Mammary epithelial cell (primary cell): ENCODE measurements at regions of chr15 and their contacts with region 1.

Region 1: DNA sequence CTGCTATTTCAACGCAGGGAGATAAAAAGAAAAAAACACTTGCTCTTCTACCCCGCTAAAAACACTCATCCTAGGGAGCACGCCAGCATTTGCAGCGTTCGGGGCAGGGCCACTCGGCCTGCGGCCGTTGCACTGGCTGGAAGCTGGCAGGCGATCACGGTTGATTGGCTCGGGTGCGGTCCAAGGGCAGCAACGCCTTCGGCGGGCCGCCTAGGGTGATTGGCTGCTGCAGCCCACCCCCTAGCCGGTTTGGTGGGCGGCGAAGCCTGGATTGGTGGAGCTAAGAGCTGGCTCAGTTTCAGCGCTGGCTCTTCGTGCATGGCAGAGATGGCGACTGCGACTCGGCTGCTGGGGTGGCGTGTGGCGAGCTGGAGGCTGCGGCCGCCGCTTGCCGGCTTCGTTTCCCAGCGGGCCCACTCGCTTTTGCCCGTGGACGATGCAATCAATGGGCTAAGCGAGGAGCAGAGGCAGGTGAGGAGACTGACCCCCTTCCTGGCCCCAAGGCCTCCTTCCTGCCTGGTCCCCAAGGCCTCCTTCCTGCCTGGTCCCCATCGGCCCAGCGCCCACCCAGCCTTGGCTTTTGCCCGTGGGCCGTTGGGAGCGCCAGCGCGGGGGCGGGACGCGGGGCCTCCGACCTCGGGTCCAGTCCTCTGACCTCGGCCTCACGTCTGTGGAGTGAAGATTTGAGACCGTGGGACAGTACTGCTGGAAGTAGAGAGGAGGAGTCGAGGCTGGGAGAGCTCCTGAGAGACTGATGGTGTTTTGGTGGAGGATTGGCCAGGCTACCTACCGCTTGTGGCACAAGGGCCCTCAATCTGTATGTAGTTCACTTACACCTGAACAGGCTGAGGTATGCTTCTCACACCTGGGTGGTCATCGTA is at the start of gene IVD:
- DNase-seq: peak; percentile 93
- H3K4me3 ChIP-seq: peak within 1 kb of the TSS; percentile 54 to 76 (median 66)
- H3K27ac ChIP-seq: peak within 1 kb of the TSS; percentile 39
- H3K4me1 ChIP-seq: peaks cover 14% of the 10 kb centered on the region
- H3K27me3 ChIP-seq: no peaks in the 10 kb centered on the region
- CTCF ChIP-seq: no peak
- total RNA-seq, gene IVD: 40.3 to 44.3 TPM

Region 2: DNA sequence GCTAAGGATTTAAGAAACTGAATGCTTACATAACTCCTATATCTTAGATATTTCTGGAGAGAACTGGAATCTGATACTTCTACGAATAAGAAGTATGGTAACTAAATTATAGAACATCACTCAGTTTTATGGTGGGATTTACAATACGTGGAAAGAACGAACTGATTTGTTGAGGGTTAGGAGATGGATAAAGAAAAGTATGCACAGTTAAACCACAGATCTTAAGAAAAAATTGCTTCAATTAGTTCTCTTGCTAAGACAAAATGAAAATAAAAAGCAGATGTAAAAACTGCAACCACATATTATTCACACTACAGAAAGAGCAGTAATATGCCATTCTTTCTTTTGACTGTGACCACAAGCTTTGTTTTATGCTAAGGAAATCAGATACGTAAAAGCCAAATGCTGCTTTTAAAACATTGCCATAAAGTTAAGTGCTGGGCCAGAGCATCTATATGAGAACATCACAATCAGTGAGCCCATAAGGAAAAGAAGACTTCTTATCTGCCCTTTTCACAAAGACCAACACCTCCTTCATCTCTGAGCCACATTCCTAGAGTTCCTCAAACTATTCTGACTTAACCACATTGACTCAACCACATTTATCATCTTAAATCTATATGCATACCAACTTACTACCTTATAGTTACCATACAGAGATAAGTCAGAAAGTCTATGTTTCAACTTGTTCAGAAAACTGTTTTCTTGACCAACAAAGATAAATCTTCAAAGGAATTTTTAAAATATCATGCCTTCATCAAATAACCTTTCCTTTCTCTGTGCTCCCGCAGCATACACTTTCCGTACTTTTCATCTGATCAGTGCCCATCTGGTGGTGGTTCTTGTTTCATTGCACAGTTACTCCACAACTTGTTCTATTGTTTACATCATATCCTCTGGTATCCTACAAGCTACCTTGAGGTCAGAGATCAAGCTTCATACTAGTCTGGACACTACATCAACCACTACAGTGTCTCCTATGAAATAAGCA is 684.8 kb before region 1 on chr15:
- CTCF ChIA-PET with region 1: no interaction called
- dilution Hi-C with region 1: no loop called
- in situ Hi-C with region 1: no loop called
- intact Hi-C with region 1: no loop called
- DNase-seq: peak; percentile 77
- H3K4me3 ChIP-seq: no peak overlapping the region
- H3K27ac ChIP-seq: no peak overlapping the region
- H3K4me1 ChIP-seq: peaks cover 25% of the 10 kb centered on the region
- H3K27me3 ChIP-seq: no peaks in the 10 kb centered on the region
- CTCF ChIP-seq: no peak

Region 3: GRCh38 chr15:40217159-40217824 is 188.4 kb before region 1 on chr15:
- CTCF ChIA-PET with region 1: no interaction called
- dilution Hi-C with region 1: loop called (anchors 5 kb)
- in situ Hi-C with region 1: no loop called
- intact Hi-C with region 1: no loop called
- DNase-seq: peak; percentile 48
- H3K4me3 ChIP-seq: no peak overlapping the region
- H3K27ac ChIP-seq: no peak overlapping the region
- H3K4me1 ChIP-seq: no peaks in the 10 kb centered on the region
- H3K27me3 ChIP-seq: no peaks in the 10 kb centered on the region
- CTCF ChIP-seq: peak; percentile 79 to 81

Region 4: DNA sequence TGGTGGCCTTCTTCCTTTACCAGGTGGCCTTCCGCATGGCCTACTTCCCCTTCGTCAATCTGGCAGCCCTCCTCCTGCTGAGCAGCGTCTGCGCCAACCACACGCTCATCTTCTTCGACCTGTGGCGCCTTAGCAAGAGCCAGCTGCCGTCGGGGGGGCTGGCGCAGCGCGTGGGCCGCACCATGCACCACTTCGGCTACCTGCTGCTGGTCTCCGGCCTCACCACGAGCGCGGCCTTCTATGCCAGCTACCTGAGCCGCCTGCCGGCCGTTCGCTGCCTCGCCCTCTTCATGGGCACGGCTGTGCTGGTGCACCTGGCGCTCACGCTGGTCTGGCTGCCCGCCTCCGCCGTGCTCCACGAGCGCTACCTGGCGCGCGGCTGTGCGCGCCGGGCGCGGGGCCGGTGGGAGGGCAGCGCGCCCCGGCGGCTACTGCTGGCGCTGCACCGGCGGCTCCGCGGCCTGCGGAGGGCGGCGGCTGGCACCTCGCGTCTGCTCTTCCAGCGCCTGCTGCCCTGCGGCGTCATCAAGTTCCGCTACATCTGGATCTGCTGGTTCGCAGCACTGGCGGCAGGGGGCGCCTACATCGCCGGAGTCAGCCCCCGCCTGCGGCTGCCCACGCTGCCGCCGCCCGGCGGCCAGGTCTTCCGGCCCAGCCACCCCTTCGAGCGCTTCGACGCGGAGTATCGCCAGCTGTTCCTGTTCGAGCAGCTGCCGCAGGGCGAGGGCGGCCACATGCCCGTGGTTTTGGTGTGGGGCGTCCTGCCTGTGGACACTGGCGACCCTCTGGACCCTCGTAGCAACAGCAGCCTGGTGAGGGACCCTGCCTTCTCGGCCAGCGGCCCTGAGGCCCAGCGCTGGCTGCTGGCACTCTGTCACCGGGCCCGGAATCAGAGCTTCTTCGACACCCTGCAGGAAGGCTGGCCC is 37.8 kb before region 1 on chr15:
- CTCF ChIA-PET with region 1: no interaction called
- dilution Hi-C with region 1: no loop called
- in situ Hi-C with region 1: no loop called
- intact Hi-C with region 1: loop called (anchors 1 kb)
- DNase-seq: peak; percentile 88
- H3K4me3 ChIP-seq: no peak overlapping the region
- H3K27ac ChIP-seq: no peak overlapping the region
- H3K4me1 ChIP-seq: peaks cover 19% of the 10 kb centered on the region
- H3K27me3 ChIP-seq: no peaks in the 10 kb centered on the region
- CTCF ChIP-seq: peak; percentile 60 to 64

Region 5: GRCh38 chr15:40379853-40380252 is 25.9 kb before region 1 on chr15:
- CTCF ChIA-PET with region 1: no interaction called
- dilution Hi-C with region 1: no loop called
- in situ Hi-C with region 1: no loop called
- intact Hi-C with region 1: loop called (anchors 1 kb)
- DNase-seq: peak; percentile 87
- H3K4me3 ChIP-seq: no peak overlapping the region
- H3K27ac ChIP-seq: no peak overlapping the region
- H3K4me1 ChIP-seq: peaks cover 23% of the 10 kb centered on the region
- H3K27me3 ChIP-seq: no peaks in the 10 kb centered on the region
- CTCF ChIP-seq: no peak

Region 6: DNA sequence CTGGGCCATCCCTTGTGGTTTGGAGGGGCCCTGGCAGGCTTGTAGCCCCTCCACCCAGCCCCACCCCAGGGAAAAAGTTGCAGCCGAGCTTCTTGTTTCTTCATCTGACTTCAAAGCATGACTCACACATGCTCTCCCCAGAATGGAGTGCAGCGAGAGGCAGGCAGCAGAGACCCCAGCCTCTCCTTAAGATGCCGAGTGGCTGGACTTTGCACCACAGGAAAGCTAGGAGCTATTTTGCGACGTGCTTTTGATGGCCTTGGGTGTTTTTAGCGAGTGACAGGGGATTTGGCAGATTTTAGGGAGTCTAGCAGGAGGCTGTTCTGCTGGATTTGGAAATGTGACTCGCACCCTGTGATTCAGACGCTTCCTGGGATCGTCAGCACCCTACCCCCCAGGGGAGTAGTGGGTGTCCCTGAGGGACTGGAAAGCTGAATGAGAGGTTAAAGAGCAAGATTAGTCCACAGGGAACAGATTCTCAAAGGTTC is 49.2 kb after region 1 on chr15:
- CTCF ChIA-PET with region 1: no interaction called
- dilution Hi-C with region 1: loop called (anchors 5 kb)
- in situ Hi-C with region 1: no loop called
- intact Hi-C with region 1: no loop called
- DNase-seq: peak; percentile 58
- H3K4me3 ChIP-seq: no peak overlapping the region
- H3K27ac ChIP-seq: no peak overlapping the region
- H3K4me1 ChIP-seq: peaks cover 33% of the 10 kb centered on the region
- H3K27me3 ChIP-seq: no peaks in the 10 kb centered on the region
- CTCF ChIP-seq: no peak